CD8-positive, alpha-beta memory T cell (primary cell): ENCODE measurements at regions of chr6 and their contacts with region 1.

Region 1: GRCh38 chr6:105431226-105431625 is 28.3 kb upstream of the PREP start:
- DNase-seq: peak in 2 of 5 donors; percentile 36 to 40
- H3K4me3 ChIP-seq: no peak overlapping the region
- H3K4me3 Mint-ChIP-seq: no peak overlapping the region
- H3K27ac ChIP-seq: no peak overlapping the region
- H3K27ac Mint-ChIP-seq: peak overlapping the region in 1 of 8 donors; percentile 18
- H3K4me1 ChIP-seq: no peaks in the 10 kb centered on the region
- H3K4me1 Mint-ChIP-seq: no peaks in the 10 kb centered on the region
- H3K27me3 ChIP-seq: no peaks in the 10 kb centered on the region
- H3K27me3 Mint-ChIP-seq: no peaks in the 10 kb centered on the region

Region 2: DNA sequence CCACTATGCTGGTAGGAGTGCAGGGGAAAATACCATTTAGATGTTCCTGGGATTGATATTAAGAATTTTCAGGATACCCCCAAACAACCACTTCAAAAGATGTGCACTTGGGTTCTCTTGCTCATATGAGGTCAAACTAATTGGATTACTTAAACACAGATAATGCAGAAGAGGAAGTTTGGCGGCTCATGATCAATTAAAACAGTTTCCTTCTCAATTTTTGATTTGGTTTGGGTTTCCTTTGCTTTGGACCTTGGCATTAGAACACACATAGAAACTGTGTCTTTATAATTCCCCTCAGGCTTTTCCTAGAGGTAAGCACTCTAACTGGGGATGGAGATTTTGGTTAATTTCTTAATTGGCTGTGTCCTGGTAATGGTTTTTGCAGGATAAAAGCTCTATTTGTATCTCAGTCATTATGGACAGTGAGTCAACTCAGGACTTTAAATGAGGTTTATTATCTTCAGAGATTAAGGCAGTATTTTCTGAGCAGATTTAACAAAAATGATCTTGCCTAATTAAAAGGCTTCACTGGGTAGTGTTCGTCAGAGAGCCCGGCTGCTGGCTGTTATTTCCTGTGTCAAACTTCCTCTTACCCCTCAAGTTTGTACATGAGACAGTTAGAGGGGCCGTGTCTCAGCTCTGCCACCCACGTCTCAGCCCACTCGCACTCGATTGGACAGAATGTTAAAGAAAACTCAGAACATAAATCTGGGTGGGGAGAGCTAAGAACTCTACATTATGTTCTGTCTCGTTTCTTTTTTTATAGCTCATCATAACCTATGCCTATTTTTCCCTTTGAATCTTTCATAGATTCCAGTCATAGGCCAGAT is 21.9 kb after region 1 on chr6:
- CTCF ChIA-PET with region 1: interaction called, 19 read pairs
- POLR2A ChIA-PET with region 1: no interaction called
- DNase-seq: peak; percentile 58 to 81 (median 72)
- H3K4me3 ChIP-seq: peak overlapping the region; percentile 30
- H3K4me3 Mint-ChIP-seq: peak overlapping the region; percentile 80 to 92 (median 86)
- H3K27ac ChIP-seq: peak overlapping the region; percentile 64
- H3K27ac Mint-ChIP-seq: peak overlapping the region; percentile 85 to 97 (median 94)
- H3K4me1 ChIP-seq: peaks cover 19% of the 10 kb centered on the region
- H3K4me1 Mint-ChIP-seq: peaks cover 54 to 65% (median 59%) of the 10 kb centered on the region in 3 donors
- H3K27me3 ChIP-seq: no peaks in the 10 kb centered on the region
- H3K27me3 Mint-ChIP-seq: peaks cover 0 to 3% of the 10 kb centered on the region in 2 donors

Region 3: DNA sequence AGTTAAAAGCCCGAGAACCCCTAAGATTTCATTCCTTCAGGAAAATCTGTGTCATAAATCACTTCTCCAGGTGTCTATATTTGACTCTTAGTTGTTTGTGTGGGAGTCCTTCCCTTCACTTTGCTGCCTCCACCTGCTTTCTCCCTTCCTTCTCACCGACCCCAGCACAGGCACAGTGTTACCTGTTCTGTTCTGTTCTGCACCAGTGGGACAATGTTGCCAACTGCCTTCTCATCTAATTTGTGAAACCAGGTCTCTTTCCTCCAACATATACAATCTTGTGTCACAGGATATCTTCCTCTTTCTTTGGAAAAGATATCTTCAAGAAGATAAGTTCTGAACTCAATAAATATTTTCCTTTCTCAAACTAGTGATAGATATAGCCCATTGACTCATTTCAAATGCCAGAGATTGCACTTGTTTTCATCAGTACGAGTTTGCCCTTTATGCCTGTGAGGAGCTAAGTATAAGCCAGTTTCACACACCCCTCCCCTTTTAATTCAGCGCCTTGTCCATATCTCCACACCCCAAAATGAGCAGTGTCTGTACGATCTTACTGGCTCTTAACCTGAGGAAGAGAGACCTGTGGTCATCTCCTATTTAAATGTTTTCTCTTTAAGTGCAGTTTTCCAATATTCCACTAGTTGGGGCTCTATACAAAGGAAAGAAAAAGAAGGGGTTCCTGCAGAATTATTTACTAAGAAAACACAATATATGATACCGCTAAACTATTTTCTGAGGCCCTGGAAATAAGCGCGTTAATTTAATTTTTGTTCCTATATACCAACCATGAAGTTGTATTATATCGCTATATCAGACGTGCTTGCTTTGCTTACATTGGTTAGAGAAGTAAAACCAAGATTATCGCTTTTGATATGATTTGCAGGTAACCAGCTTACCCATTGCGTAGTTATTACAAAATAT is 53.3 kb after region 1 on chr6:
- CTCF ChIA-PET with region 1: interaction called, 14 read pairs
- POLR2A ChIA-PET with region 1: no interaction called
- DNase-seq: peak in 2 of 5 donors; percentile 18 to 37
- H3K4me3 ChIP-seq: no peak overlapping the region
- H3K4me3 Mint-ChIP-seq: peak overlapping the region; percentile 62 to 87 (median 78)
- H3K27ac ChIP-seq: no peak overlapping the region
- H3K27ac Mint-ChIP-seq: peak overlapping the region; percentile 69 to 99 (median 89)
- H3K4me1 ChIP-seq: no peaks in the 10 kb centered on the region
- H3K4me1 Mint-ChIP-seq: peaks cover 34 to 60% (median 50%) of the 10 kb centered on the region in 3 donors
- H3K27me3 ChIP-seq: no peaks in the 10 kb centered on the region
- H3K27me3 Mint-ChIP-seq: no peaks in the 10 kb centered on the region

Region 4: GRCh38 chr6:105695461-105695860 is 264.2 kb after region 1 on chr6:
- CTCF ChIA-PET with region 1: no interaction called
- POLR2A ChIA-PET with region 1: no interaction called
- DNase-seq: no peak
- H3K4me3 ChIP-seq: no peak overlapping the region
- H3K4me3 Mint-ChIP-seq: no peak overlapping the region
- H3K27ac ChIP-seq: no peak overlapping the region
- H3K27ac Mint-ChIP-seq: peak overlapping the region in 1 of 8 donors; percentile 30
- H3K4me1 ChIP-seq: no peaks in the 10 kb centered on the region
- H3K4me1 Mint-ChIP-seq: no peaks in the 10 kb centered on the region
- H3K27me3 ChIP-seq: no peaks in the 10 kb centered on the region
- H3K27me3 Mint-ChIP-seq: no peaks in the 10 kb centered on the region

Region 5: GRCh38 chr6:106085984-106086813 is 655.0 kb after region 1 on chr6 and contains the start of gene PRDM1:
- CTCF ChIA-PET with region 1: interaction called, 10 read pairs
- POLR2A ChIA-PET with region 1: no interaction called
- DNase-seq: peak; percentile 52 to 88 (median 81)
- H3K4me3 ChIP-seq: peak within 1 kb of the TSS; percentile 61
- H3K4me3 Mint-ChIP-seq: peak within 1 kb of the TSS; percentile 90 to 97 (median 93)
- H3K27ac ChIP-seq: peak within 1 kb of the TSS; percentile 52
- H3K27ac Mint-ChIP-seq: peak within 1 kb of the TSS; percentile 61 to 97 (median 92)
- H3K4me1 ChIP-seq: peaks cover 66% of the 10 kb centered on the region
- H3K4me1 Mint-ChIP-seq: peaks cover 80 to 94% (median 93%) of the 10 kb centered on the region in 3 donors
- H3K27me3 ChIP-seq: no peaks in the 10 kb centered on the region
- H3K27me3 Mint-ChIP-seq: peaks cover 0 to 4% of the 10 kb centered on the region in 2 donors
- total RNA-seq, gene PRDM1: 88.2 to 90.7 TPM